AG04449 (cell line): ENCODE measurements at regions of chr20 and their contacts with region 1.

Region 1: GRCh38 chr20:44609511-44610312 is 27.3 kb downstream of the PKIG start:
- DNase-seq: peak; percentile 26
- H3K4me3 ChIP-seq: no peak overlapping the region
- CTCF ChIP-seq: peak; percentile 94

Region 2: GRCh38 chr20:43975096-43975768 is 634.5 kb before region 1 on chr20:
- CTCF ChIA-PET with region 1: no interaction called
- POLR2A ChIA-PET with region 1: no interaction called
- DNase-seq: peak; percentile 53
- H3K4me3 ChIP-seq: no peak overlapping the region
- CTCF ChIP-seq: no peak

Region 3: DNA sequence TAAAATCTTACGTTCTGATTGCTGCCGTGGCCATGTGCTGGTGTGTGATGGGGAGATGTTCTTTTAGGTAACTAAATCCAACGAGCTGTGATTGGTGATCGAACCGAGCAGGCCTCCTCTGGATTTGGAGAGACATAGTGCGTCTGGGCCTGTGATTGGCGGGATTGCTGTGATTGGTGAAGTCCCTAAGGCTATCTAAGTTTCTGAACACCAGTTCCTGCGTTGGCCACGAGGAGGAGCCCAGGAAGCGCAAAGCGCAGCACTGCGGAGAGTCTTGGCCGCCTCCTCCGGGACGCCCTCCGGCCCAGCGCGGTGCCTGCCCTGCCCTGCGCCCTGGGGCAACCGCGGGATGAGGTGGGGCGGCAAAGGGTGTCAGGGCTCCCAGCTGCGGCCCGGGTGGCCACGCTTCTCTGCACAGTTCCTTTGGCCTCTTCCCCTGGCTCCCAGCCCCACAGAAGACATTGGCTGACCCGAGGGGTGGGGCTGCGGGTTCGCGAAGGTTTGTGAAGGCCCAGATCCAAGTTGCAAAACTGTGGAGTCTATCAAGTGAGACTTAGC is 221.2 kb before region 1 on chr20:
- CTCF ChIA-PET with region 1: interaction called, 57 read pairs
- POLR2A ChIA-PET with region 1: no interaction called
- DNase-seq: peak; percentile 7
- H3K4me3 ChIP-seq: no peak overlapping the region
- CTCF ChIP-seq: peak; percentile 90

Region 4: DNA sequence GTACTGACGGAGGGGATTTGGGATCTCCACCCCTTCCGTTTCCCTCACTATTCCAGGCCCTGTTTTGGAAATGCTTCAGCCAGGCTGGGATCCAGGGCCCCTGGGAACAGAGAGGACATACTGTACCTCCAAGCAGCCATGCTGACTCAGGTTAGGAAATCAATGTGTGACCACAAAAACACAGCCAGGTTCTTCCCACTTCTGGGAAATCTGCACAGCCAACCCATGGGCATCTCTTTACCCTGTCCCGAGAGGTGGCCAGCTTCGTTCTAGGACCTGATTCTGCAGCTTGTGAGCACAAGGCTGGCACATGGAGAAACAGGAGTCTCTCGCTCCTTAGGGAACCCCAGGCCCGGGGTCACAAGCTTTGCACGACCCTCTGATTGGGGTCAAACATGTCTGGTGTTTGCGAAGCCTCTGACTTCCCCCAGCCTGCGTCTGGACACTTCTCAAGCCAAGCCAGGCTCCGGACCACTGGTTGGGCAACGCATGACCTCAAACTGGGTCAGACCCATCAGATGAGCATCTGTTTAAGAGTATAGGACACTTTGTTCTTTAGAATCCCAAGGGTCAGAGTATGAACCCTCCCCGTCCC is 142.3 kb before region 1 on chr20:
- CTCF ChIA-PET with region 1: interaction called, 19 read pairs
- POLR2A ChIA-PET with region 1: no interaction called
- DNase-seq: no peak
- H3K4me3 ChIP-seq: no peak overlapping the region
- CTCF ChIP-seq: no peak

Region 5: GRCh38 chr20:44491635-44492395 is 117.9 kb before region 1 on chr20:
- CTCF ChIA-PET with region 1: interaction called, 29 read pairs
- POLR2A ChIA-PET with region 1: interaction called, 4 read pairs
- DNase-seq: no peak
- H3K4me3 ChIP-seq: no peak overlapping the region
- CTCF ChIP-seq: no peak

Region 6: GRCh38 chr20:44532259-44532980 is 77.3 kb before region 1 on chr20:
- CTCF ChIA-PET with region 1: interaction called, 11 read pairs
- POLR2A ChIA-PET with region 1: no interaction called
- DNase-seq: no peak
- H3K4me3 ChIP-seq: peak overlapping the region; percentile 70
- CTCF ChIP-seq: no peak

Region 7: DNA sequence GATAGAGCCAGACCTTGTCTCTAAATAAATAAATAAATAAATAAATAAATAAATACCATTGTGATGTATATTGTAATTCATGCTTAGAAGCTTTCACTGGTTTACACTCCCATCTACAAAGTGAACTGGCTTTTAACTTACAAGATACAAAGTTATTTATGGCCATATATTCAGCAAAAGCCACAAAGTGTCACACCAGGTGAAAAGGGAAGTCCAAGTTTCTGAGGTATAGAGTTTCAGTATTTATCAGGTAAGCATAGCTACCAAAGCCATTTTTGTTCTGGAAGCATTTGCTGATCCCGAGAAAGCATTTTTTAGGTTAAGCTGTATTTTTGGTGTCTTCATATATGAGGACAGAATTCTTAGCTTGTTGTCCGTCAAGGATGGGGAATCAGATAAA is 49.5 kb before region 1 on chr20:
- CTCF ChIA-PET with region 1: no interaction called
- POLR2A ChIA-PET with region 1: no interaction called
- DNase-seq: no peak
- H3K4me3 ChIP-seq: no peak overlapping the region
- CTCF ChIP-seq: no peak

Region 8: GRCh38 chr20:44576297-44576696 is 33.4 kb before region 1 on chr20:
- CTCF ChIA-PET with region 1: interaction called, 12 read pairs
- POLR2A ChIA-PET with region 1: no interaction called
- DNase-seq: no peak
- H3K4me3 ChIP-seq: no peak overlapping the region
- CTCF ChIP-seq: peak; percentile 34